Panc1 (cell line): ENCODE measurements at regions of chr12 and their contacts with region 1.

Region 1: DNA sequence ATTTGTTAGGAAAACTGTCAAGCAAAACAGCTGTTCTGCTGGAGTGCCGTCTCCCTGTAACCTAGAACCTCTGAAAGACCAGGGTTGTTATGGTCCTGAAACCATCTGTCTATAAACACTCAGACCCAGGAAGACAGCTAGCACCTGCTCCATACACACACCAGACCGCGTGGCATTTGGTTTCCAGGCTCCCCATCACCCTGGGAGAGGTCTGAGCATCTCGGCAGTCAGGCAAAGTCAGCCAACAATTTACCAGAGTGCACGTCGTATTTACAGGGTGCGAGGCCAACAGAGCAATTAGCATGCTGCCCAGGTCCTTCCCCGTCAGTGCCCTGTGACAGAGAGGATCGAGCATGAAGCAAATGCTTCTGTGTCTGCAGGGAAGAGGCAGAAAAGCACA is 272.5 kb downstream of the SLC15A4 start:
- DNase-seq: no peak
- ATAC-seq: no peak
- H3K4me3 ChIP-seq: no peak overlapping the region
- H3K27ac ChIP-seq: no peak overlapping the region
- H3K4me1 ChIP-seq: no peaks in the 10 kb centered on the region
- H3K27me3 ChIP-seq: peaks cover 2% of the 10 kb centered on the region; the same call in 1 of the 2 replicates
- CTCF ChIP-seq: no peak

Region 2: GRCh38 chr12:127628645-127629044 is 922.6 kb before region 1 on chr12:
- CTCF ChIA-PET with region 1: no interaction called
- POLR2A ChIA-PET with region 1: no interaction called
- in situ Hi-C with region 1: no loop called
- intact Hi-C with region 1: no loop called
- DNase-seq: no peak
- ATAC-seq: no peak
- H3K4me3 ChIP-seq: no peak overlapping the region
- H3K27ac ChIP-seq: no peak overlapping the region
- H3K4me1 ChIP-seq: no peaks in the 10 kb centered on the region
- H3K27me3 ChIP-seq: no peaks in the 10 kb centered on the region
- CTCF ChIP-seq: no peak

Region 3: DNA sequence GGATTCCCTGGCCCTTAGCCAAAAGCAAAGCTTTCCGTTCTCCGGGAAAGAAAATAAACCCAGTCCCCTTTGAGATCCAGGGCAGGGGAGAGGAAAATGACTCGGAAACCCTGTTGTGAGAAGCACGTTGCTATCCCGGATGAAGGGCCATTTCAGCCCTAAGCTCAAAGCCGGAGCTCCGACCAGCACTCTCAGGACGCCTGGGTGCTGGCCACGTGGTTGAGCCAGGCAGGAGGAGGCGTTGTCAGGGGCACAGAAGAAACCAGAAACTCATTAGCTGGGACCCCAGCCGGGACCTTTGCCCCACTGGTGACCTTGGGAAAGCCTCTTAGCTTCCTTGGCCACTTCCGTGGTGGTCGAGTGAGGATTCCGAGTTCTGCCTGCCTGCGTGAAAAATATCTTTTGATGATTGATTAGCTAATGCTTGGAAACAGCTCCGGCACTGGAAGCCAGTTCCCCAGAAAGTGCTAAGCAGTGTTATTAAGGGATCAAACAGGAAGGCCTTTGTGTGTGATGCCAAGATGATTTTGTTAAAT is 1553.4 kb after region 1 on chr12:
- CTCF ChIA-PET with region 1: no interaction called
- POLR2A ChIA-PET with region 1: interaction called, 11 read pairs
- in situ Hi-C with region 1: no loop called
- intact Hi-C with region 1: no loop called
- DNase-seq: no peak
- ATAC-seq: no peak
- H3K4me3 ChIP-seq: no peak overlapping the region
- H3K27ac ChIP-seq: no peak overlapping the region
- H3K4me1 ChIP-seq: no peaks in the 10 kb centered on the region
- H3K27me3 ChIP-seq: no peaks in the 10 kb centered on the region; the same call in 1 of the 2 replicates
- CTCF ChIP-seq: no peak